Head of caudate nucleus (tissue), 42 donors: ENCODE measurements at regions of chr15 and their contacts with region 1.

Region 1: DNA sequence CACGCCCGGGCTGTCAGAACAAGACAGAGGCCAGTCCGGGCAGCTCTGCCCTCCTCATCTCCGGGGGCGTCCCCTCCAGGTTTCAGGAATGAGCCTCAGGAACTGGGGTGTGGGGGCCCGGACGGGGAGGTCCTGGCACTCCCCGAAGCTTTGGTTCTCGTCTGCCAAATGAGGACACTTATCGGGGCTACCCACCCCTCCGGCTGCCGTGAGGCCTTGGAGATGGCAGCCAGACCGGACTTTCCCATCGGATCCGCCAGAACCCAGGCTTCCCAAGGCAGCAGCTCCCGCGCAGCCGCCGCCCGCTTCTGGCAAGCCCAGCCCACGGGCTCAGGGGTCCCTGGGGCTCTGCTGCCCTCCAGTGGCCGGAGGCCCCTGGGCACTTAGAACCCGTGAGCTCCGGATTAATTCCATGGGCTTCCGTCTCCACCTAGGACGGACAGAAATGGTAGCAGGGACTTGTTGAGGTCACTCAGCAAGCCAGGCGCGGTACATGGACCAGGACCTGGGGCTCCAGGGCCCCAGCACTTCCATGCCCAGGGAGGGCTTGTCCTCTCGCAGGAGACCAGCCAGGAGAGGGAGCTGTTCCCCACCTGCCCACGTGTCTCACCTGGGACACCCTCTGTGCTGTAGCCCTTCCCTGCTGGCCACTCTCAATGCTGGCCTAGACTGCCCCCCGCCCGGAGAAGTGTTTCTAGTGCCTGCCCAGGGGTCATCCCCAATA is 89.4 kb downstream of the LINGO1 start:
- DNase-seq: peak; percentile 74 to 96 (median 90)

Region 2: DNA sequence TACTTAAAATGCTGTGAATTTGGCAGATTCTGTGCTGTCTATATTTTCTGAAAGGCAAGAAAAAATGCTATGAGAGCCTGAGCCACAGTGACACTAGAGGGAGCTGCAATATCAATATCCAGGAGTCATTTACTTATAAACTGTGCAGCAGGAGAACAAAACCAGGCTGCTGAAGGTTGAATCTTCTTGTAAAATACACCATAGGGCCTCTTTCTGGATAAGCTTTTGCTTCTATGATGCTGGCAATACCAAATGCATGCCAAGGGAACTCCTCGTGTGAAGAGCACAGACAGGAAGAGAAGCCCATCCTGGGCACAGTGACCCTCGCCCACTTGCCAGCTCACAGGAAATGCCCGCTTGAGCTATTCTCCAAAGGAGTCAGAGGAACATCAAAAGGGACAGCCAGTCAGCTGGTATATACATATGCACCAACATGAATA is 424.4 kb before region 1 on chr15:
- intact Hi-C with region 1: loop called (anchors 5 kb)
- DNase-seq: peak in 29 of 42 donors; percentile 18 to 82 (median 57)

Region 3: GRCh38 chr15:77186594-77187011 is 356.7 kb before region 1 on chr15:
- intact Hi-C with region 1: loop called (anchors 5 kb)
- DNase-seq: peak in 8 of 42 donors; percentile 5 to 31 (median 12)

Region 4: GRCh38 chr15:77430213-77430612 is 113.1 kb before region 1 on chr15:
- intact Hi-C with region 1: no loop called
- DNase-seq: no peak

Region 5: GRCh38 chr15:77496710-77497103 is 46.6 kb before region 1 on chr15:
- intact Hi-C with region 1: loop called (anchors 2 kb)
- DNase-seq: peak; percentile 58 to 95 (median 85)

Region 6: GRCh38 chr15:77633134-77633912 is 90.0 kb after region 1 on chr15:
- intact Hi-C with region 1: loop called (anchors 5 kb)
- DNase-seq: peak; percentile 78 to 97 (median 93)